HepG2 (cell line): ENCODE measurements at regions of chrX and their contacts with region 1.

Region 1: DNA sequence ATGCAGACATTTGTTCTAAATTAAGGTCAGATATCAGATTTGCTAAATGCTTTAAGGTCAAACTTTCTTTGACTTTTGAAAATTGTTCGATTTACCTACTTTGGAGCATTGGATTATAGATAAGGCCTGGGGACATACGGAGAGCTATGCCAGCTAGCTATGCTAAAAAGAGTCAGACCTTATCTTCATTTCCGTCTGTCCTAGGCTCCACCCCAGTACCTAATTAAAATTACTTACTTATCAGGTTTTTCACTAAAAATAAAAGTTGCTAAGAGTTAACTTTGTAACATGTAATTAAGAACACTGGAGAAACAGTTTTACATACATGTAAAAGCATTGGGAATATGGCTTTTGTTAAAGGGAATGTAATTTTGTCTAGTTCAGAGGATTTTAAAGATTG is 7.1 kb upstream of the TMEM35A start:
- DNase-seq: no peak
- ATAC-seq: no peak
- H3K4me3 ChIP-seq: no peak overlapping the region
- H3K27ac ChIP-seq: no peak overlapping the region
- H3K4me1 ChIP-seq: no peaks in the 10 kb centered on the region
- H3K27me3 ChIP-seq: no peaks in the 10 kb centered on the region
- CTCF ChIP-seq: no peak
- EP300 ChIP-seq: no peak
- POLR2A ChIP-seq: no peak
- RAD21 ChIP-seq: no peak

Region 2: GRCh38 chrX:100584611-100585010 is 487.0 kb before region 1 on chrX and contains the start of gene TNMD:
- CTCF ChIA-PET with region 1: no interaction called
- POLR2A ChIA-PET with region 1: no interaction called
- in situ Hi-C with region 1: no loop called
- intact Hi-C with region 1: no loop called
- DNase-seq: no peak
- ATAC-seq: no peak
- H3K4me3 ChIP-seq: no peak within 1 kb of the TSS
- H3K27ac ChIP-seq: no peak within 1 kb of the TSS
- H3K4me1 ChIP-seq: no peaks in the 10 kb centered on the region
- H3K27me3 ChIP-seq: no peaks in the 10 kb centered on the region
- CTCF ChIP-seq: no peak
- EP300 ChIP-seq: no peak
- POLR2A ChIP-seq: no peak
- RAD21 ChIP-seq: no peak
- total RNA-seq, gene TNMD: not detected in 2 replicates

Region 3: GRCh38 chrX:100731441-100732281 is 339.9 kb before region 1 on chrX and contains the start of gene SYTL4:
- CTCF ChIA-PET with region 1: no interaction called
- POLR2A ChIA-PET with region 1: no interaction called
- in situ Hi-C with region 1: no loop called
- intact Hi-C with region 1: loop called (anchors 5 kb)
- DNase-seq: no peak
- ATAC-seq: peak; percentile 44
- H3K4me3 ChIP-seq: peak within 1 kb of the TSS; percentile 26 to 64 (median 57); a peak in 5 of 6 replicates
- H3K27ac ChIP-seq: no peak within 1 kb of the TSS
- H3K4me1 ChIP-seq: no peaks in the 10 kb centered on the region
- H3K27me3 ChIP-seq: peaks cover 0 to 1% of the 10 kb centered on the region in 2 experiments; a peak in 1 of 5 replicates
- CTCF ChIP-seq: no peak
- EP300 ChIP-seq: no peak
- POLR2A ChIP-seq: no peak
- RAD21 ChIP-seq: no peak
- total RNA-seq, gene SYTL4: 0.67 and 0.73 TPM in 2 replicates

Region 4: GRCh38 chrX:101407748-101408531 is 336.4 kb after region 1 on chrX and contains the starts of genes GLA and HNRNPH2:
- CTCF ChIA-PET with region 1: no interaction called
- POLR2A ChIA-PET with region 1: no interaction called
- in situ Hi-C with region 1: no loop called
- intact Hi-C with region 1: no loop called
- DNase-seq: peak; percentile 97
- ATAC-seq: peak; percentile 94
- H3K4me3 ChIP-seq: peak within 1 kb of the TSS; percentile 68 to 82 (median 79)
- H3K27ac ChIP-seq: peak within 1 kb of the TSS; percentile 97
- H3K4me1 ChIP-seq: peaks cover 8% of the 10 kb centered on the region
- H3K27me3 ChIP-seq: no peaks in the 10 kb centered on the region
- CTCF ChIP-seq: no peak
- EP300 ChIP-seq: no peak
- POLR2A ChIP-seq: peak; percentile 70 to 90
- RAD21 ChIP-seq: no peak
- total RNA-seq, gene GLA: 33.3 and 59.3 TPM in 2 replicates
- total RNA-seq, gene HNRNPH2: 56.9 and 80.1 TPM in 2 replicates